GM12878 (cell line): ENCODE measurements at regions of chr12 and their contacts with region 1.

Region 1: DNA sequence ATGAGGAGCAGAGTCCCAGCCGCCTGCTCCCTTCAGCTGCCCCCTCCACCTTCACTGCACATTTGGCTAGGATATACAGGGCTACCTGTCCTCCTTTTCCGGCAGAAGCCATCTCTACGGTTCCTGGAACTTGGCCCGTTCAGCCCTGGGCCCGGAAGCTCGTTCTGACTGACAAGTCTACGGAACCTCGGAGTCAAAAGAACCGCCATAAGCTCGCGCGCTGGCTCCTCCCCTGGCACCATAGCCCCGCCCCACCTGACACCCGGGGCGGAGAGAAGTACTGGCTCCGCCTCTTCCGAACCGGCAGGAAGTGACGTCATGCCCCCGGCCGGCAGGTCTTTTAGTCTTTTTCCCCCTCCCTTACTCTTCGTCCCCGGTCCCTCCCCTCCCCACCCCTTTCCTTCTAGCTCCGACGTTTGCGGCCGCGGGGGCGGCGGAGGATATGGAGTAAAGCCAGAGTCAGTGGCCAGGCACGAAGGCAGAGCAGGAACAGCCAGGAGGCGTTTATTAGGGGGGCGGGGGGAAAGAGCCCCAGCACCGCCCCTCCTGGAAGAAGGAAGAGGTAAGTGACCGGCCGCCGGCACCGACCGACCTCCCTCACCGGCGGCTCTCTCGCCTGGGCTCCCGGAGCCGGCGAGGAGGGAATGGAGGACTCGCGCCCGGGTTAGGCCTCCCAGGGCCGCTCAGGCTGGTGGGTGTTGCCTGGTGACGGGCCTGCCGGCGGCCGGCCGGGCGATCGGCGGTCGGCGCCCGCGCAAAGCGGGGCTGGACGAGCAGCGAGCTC is at the starts of genes DEPDC4 and SCYL2:
- DNase-seq: peak; percentile 84
- ATAC-seq: peak; percentile 89
- H3K4me3 ChIP-seq: peak within 1 kb of the TSS; percentile 98
- H3K27ac ChIP-seq: peak within 1 kb of the TSS; percentile 78
- H3K4me1 ChIP-seq: peaks cover 3% of the 10 kb centered on the region; the same call in 1 of the 2 replicates
- H3K27me3 ChIP-seq: no peaks in the 10 kb centered on the region
- CTCF ChIP-seq: no peak
- EP300 ChIP-seq: no peak
- POLR2A ChIP-seq: peak; percentile 74
- RAD21 ChIP-seq: no peak
- polyA plus RNA-seq, gene DEPDC4: 2.0 to 4.0 TPM
- polyA plus RNA-seq, gene SCYL2: 5.4 to 7.2 TPM

Region 2: GRCh38 chr12:99920353-99920960 is 346.6 kb before region 1 on chr12:
- CTCF ChIA-PET with region 1: no interaction called
- POLR2A ChIA-PET with region 1: no interaction called
- RAD21 ChIA-PET with region 1: no interaction called
- SMC1A ChIA-PET with region 1: no interaction called
- in situ Hi-C with region 1: no loop called
- intact Hi-C with region 1: no loop called
- DNase-seq: no peak
- ATAC-seq: no peak
- H3K4me3 ChIP-seq: no peak overlapping the region
- H3K27ac ChIP-seq: no peak overlapping the region
- H3K4me1 ChIP-seq: no peaks in the 10 kb centered on the region
- H3K27me3 ChIP-seq: no peaks in the 10 kb centered on the region
- CTCF ChIP-seq: no peak
- EP300 ChIP-seq: no peak
- POLR2A ChIP-seq: no peak
- RAD21 ChIP-seq: no peak

Region 3: DNA sequence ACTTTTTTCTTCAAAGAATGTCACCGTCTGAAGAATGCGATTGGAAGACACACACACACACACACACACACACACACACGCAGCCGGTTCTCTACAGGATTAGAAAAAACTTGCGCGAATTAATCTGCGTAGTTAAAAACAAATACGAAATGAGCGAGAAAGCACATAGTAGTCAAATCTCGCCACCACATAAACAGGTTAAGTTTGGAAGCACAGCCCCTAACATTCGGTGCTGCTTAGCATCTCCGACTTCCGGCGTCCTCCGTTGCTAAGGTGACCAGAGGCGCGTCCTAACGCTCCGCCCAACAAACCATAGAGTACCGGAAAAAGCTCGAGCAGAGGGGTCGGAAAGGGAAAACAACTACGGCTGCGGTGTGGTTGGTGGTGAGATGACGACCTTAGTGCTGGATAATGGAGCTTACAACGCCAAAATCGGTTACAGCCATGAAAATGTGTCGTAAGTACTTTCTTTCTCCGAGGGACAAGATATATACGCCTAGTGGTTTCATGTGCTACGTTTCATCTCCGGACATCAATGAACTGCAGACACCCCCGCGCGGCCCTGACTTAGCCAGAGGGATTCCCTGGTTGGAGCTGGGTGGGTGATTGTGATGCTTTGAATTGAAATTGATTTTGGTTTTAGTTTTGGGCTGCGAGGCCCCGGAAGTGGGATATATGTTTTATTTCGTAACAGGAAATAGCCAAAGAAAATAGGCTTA is 66.4 kb before region 1 on chr12 and contains the start of gene ACTR6:
- CTCF ChIA-PET with region 1: interaction called, 3 read pairs
- POLR2A ChIA-PET with region 1: interaction called, 7 read pairs
- RAD21 ChIA-PET with region 1: interaction called, 3 read pairs
- SMC1A ChIA-PET with region 1: no interaction called
- in situ Hi-C with region 1: no loop called
- intact Hi-C with region 1: loop called (anchors 2 kb)
- DNase-seq: peak; percentile 91
- ATAC-seq: peak; percentile 87
- H3K4me3 ChIP-seq: peak within 1 kb of the TSS; percentile 82
- H3K27ac ChIP-seq: peak within 1 kb of the TSS; percentile 83
- H3K4me1 ChIP-seq: peaks cover 6% of the 10 kb centered on the region; the same call in 1 of the 2 replicates
- H3K27me3 ChIP-seq: no peaks in the 10 kb centered on the region
- CTCF ChIP-seq: no peak
- EP300 ChIP-seq: peak in 1 of 2 experiments; percentile 2; a peak in 1 of 4 replicates
- POLR2A ChIP-seq: peak; percentile 82
- RAD21 ChIP-seq: no peak
- polyA plus RNA-seq, gene ACTR6: 56.1 to 62.4 TPM

Region 4: GRCh38 chr12:100225491-100225890 is 41.5 kb before region 1 on chr12:
- CTCF ChIA-PET with region 1: no interaction called
- POLR2A ChIA-PET with region 1: no interaction called
- RAD21 ChIA-PET with region 1: no interaction called
- SMC1A ChIA-PET with region 1: no interaction called
- in situ Hi-C with region 1: no loop called
- intact Hi-C with region 1: no loop called
- DNase-seq: no peak
- ATAC-seq: no peak
- H3K4me3 ChIP-seq: no peak overlapping the region
- H3K27ac ChIP-seq: no peak overlapping the region
- H3K4me1 ChIP-seq: no peaks in the 10 kb centered on the region
- H3K27me3 ChIP-seq: no peaks in the 10 kb centered on the region
- CTCF ChIP-seq: no peak
- EP300 ChIP-seq: no peak
- POLR2A ChIP-seq: no peak
- RAD21 ChIP-seq: no peak

Region 5: DNA sequence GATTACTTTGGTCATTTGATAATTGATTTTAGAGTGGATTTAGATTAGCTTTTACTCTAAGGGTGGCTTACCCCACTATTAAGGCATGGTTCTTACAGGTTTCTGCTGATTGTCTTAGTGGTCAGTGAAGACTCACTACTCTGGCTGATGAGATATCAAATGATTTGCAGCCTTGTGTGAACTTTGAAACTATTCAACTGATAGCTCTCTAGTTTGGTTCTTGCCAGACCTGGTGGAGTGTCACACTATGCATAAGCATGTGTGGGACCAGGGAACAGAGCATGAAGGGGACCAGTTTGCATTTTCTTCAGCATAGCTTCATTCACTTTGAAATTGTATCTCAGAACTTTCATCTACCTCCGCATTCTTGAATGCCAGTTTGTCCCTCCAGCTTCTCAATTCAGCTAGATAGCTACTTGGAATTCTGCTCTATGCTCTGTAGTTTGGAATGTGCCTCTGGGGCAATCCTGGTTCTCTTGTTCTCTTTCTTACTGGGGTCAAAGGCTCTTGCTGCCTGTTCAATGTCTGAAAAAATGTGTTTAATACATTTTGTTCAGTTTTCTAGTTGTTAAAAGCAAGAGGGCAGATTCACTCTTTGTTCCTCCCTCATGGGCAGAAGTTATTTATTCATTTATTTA is 12.7 kb after region 1 on chr12:
- CTCF ChIA-PET with region 1: interaction called, 7 read pairs
- POLR2A ChIA-PET with region 1: interaction called, 12 read pairs
- RAD21 ChIA-PET with region 1: interaction called, 6 read pairs
- SMC1A ChIA-PET with region 1: interaction called, 16 read pairs
- in situ Hi-C with region 1: no loop called
- intact Hi-C with region 1: no loop called
- DNase-seq: no peak
- ATAC-seq: peak; percentile 34
- H3K4me3 ChIP-seq: no peak overlapping the region
- H3K27ac ChIP-seq: no peak overlapping the region
- H3K4me1 ChIP-seq: no peaks in the 10 kb centered on the region
- H3K27me3 ChIP-seq: no peaks in the 10 kb centered on the region
- CTCF ChIP-seq: no peak
- EP300 ChIP-seq: no peak
- POLR2A ChIP-seq: no peak
- RAD21 ChIP-seq: no peak

Region 6: DNA sequence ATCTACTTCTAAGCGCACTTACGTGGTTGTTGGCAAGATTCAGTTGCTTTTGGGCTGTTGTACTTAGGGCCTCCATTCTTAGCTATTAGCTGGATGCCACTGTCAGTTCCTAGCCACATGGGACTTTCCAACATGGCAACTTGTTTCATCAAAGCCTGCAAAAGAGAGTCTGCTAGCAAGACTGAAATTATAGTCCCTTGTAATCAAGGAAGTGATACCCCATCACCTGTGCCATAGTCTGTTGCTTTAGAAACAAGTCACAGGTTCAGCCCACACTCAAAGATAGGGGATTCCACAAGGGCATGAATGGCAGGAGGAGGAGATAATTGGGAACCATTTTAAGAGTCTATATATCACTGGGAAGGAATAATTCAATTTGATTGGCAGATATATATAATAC is 62.8 kb after region 1 on chr12:
- CTCF ChIA-PET with region 1: interaction called, 3 read pairs
- POLR2A ChIA-PET with region 1: interaction called, 18 read pairs
- RAD21 ChIA-PET with region 1: interaction called, 5 read pairs
- SMC1A ChIA-PET with region 1: interaction called, 14 read pairs
- in situ Hi-C with region 1: no loop called
- intact Hi-C with region 1: no loop called
- DNase-seq: peak; percentile 77
- ATAC-seq: peak; percentile 99
- H3K4me3 ChIP-seq: no peak overlapping the region
- H3K27ac ChIP-seq: peak overlapping the region; percentile 89
- H3K4me1 ChIP-seq: peaks cover 9% of the 10 kb centered on the region
- H3K27me3 ChIP-seq: no peaks in the 10 kb centered on the region
- CTCF ChIP-seq: no peak
- EP300 ChIP-seq: peak in 1 of 2 experiments; percentile 53; a peak in 2 of 4 replicates
- POLR2A ChIP-seq: no peak
- RAD21 ChIP-seq: no peak